ENCODE measurements at regions of chr6 and their contacts with region 1.

Region 1: GRCh38 chr6:148464319-148465010 is 121.8 kb downstream of the SASH1 start:
- DNase-seq: no peak
- H3K4me3 ChIP-seq: no peak overlapping the region
- H3K27ac ChIP-seq: no peak overlapping the region
- H3K27me3 ChIP-seq: no peaks in the 10 kb centered on the region
- CTCF ChIP-seq: peak; percentile 91

Region 2: DNA sequence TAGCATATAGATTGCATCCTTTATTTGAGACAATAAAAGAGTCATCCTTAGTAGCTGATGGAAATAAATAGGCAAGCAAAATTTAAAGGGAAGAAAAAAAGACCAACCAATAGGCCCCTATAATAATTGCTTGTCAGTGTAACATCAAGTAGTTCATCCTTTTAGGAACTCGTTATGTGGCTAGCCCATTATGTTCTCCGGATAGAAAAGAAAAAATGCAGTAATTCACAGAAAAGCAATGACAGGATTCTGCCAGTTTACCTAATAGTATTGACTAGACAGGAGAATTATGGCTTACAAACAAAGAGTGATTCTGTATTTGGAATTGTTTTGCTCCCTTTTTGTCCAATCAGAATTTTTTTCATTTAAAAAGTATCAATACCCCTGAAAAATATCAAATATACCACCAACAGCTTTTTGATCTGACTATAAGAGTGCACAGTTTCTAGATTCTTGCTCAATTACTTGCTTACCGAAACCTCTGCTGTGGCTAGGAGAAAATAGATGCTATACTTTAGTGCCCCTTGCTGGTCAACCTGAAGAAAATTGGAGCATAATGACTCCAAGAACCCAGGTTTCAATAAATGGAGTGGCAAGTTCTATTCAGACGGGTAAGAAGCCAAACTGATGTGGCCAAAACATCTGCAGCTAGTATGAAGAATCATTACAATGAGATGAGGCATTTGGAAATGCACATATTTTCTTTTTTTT is 213.3 kb before region 1 on chr6:
- CTCF ChIA-PET with region 1: interaction called, 15 read pairs
- POLR2A ChIA-PET with region 1: no interaction called
- DNase-seq: peak; percentile 46
- H3K4me3 ChIP-seq: no peak overlapping the region
- H3K27ac ChIP-seq: no peak overlapping the region
- H3K27me3 ChIP-seq: no peaks in the 10 kb centered on the region
- CTCF ChIP-seq: peak; percentile 65

Region 3: DNA sequence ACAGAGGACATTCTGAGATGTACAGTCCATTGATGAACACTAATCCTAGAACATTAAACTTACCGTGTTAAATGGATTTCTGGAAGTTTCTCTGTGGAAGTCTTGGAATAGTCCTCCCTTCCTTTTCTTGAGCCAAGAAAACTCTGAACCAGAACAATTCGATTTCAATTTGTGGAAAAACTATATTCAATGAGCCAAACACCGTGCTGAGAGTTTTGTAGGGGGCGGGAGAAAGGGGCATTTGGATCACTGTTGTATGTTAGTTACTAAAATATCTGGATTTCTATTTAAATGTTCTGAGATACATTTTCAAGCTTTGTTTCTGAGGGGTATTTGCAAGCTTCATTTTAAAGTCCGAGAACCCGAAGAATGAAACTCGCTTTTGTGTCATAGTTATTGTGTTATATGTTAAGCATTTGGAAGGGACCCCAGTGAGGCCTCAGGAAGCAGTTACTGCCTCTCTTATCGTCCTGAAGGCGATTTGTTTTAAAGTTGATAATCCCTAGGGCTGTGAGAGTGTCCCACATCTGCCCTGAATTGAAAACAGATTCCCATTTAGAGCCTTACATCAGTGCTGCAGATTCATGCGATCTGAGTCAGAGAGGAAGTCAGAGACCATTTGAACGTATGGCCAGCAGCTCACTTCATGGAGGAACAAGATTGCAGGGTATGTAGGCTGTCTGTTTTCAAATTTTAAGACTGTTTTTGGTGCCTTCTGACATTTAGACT is 192.6 kb before region 1 on chr6:
- CTCF ChIA-PET with region 1: interaction called, 14 read pairs
- POLR2A ChIA-PET with region 1: interaction called, 8 read pairs
- DNase-seq: peak; percentile 95
- H3K4me3 ChIP-seq: peak overlapping the region; percentile 55
- H3K27ac ChIP-seq: peak overlapping the region; percentile 90
- H3K27me3 ChIP-seq: no peaks in the 10 kb centered on the region
- CTCF ChIP-seq: no peak

Region 4: GRCh38 chr6:148367411-148368024 is 96.9 kb before region 1 on chr6:
- CTCF ChIA-PET with region 1: no interaction called
- POLR2A ChIA-PET with region 1: no interaction called
- DNase-seq: peak; percentile 38
- H3K4me3 ChIP-seq: no peak overlapping the region
- H3K27ac ChIP-seq: no peak overlapping the region
- H3K27me3 ChIP-seq: no peaks in the 10 kb centered on the region
- CTCF ChIP-seq: no peak

Region 5: DNA sequence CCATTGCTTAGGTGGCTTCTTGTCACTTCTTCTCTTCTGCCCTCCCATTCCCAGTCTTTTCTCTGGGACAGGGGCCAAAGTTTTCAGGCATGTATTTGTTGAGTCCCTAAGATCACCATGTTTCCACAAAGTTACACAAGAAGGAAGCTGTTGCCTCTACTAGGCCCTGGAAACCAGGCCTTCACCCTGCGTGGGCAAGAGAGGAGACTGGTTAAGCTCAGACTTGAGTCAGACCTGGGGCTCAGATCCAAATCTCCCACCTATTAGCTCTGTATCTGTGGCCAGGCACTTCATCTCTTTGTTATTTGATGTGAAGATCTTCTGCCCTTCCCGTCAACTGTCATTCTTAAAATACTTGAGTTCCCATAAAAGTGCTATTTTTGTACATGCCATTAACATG is 32.8 kb after region 1 on chr6:
- CTCF ChIA-PET with region 1: no interaction called
- POLR2A ChIA-PET with region 1: no interaction called
- DNase-seq: no peak
- H3K4me3 ChIP-seq: no peak overlapping the region
- H3K27ac ChIP-seq: no peak overlapping the region
- H3K27me3 ChIP-seq: no peaks in the 10 kb centered on the region
- CTCF ChIP-seq: no peak

Region 6: DNA sequence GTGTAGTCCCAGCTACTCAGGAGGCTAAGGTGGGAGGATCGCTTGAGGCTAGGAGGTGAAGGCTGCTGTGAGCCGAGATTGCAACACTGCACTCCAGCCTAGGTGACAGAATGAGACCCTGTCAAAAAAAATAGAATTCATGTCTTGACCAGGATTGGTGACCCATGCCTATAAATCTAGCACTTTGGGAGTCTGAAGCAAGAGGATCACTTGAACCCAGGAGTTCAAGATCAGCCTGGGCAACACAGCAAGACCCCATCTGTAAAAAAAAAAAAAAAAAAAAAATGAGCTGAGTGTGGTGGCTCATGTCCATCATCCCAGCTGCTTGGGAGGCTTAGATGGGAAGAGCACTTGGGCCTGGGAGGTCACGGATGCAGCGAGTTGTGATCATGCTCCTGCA is 1136.0 kb after region 1 on chr6:
- CTCF ChIA-PET with region 1: no interaction called
- POLR2A ChIA-PET with region 1: no interaction called
- DNase-seq: no peak
- H3K4me3 ChIP-seq: no peak overlapping the region
- H3K27ac ChIP-seq: no peak overlapping the region
- H3K27me3 ChIP-seq: no peaks in the 10 kb centered on the region
- CTCF ChIP-seq: no peak

Measured in AG04450 (cell line).